IMR-90 (cell line): ENCODE measurements at regions of chr17 and their contacts with region 1.

Region 1: DNA sequence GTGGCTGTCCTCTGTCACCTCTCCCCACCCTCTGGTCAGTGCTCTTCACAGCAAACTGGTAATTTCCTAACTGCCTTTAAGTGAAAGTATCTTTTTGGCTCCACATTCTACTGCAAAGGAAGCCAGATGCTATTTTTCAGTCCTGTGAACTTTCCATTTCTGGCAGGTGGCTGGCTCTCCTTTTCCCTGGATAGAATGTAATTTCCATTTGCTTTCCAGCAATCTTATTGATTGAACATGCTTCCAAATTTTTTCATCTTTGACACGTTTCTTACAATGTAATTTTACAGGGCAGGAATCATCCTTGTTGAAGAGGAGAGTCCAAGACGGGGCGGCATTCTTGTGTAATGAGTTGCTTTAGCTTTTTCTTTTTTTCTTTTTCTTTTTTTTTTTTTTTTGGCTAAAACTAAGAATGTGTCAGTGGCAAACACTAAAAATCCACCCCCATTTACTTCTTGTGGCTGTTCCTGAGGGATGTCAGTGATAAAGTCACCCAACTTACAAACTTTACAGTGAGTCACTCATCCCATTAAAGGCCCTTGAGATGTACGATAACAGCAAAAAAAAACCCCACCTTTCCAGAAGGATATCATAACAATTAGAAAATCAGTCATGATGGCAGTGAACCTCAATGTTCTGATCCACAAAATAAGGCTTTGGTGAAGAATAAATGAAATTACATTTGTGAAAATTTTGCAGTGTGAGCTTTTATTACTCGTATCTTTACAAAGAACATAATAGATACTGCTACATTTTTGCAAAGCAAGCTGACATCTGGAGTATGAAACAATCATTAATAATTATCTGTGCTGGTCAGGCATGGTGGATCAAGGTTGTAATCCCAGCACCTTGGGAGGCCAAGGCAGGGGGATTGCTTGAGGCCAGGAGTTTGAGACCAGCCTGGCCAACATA is 29.3 kb upstream of the PRKCA start:
- DNase-seq: peak; percentile 89
- ATAC-seq: peak; percentile 38
- H3K4me3 ChIP-seq: peak overlapping the region; percentile 14; the same call in 1 of the 2 replicates
- H3K27ac ChIP-seq: peak overlapping the region; percentile 86
- H3K4me1 ChIP-seq: peaks cover 22% of the 10 kb centered on the region
- H3K27me3 ChIP-seq: no peaks in the 10 kb centered on the region
- CTCF ChIP-seq: no peak
- POLR2A ChIP-seq: no peak
- RAD21 ChIP-seq: no peak

Region 2: GRCh38 chr17:66287911-66288310 is 14.8 kb after region 1 on chr17:
- CTCF ChIA-PET with region 1: no interaction called
- POLR2A ChIA-PET with region 1: interaction called, 13 read pairs
- dilution Hi-C with region 1: no loop called
- in situ Hi-C with region 1: no loop called
- intact Hi-C with region 1: no loop called
- DNase-seq: no peak
- ATAC-seq: no peak
- H3K4me3 ChIP-seq: no peak overlapping the region
- H3K27ac ChIP-seq: no peak overlapping the region
- H3K4me1 ChIP-seq: peaks cover 2% of the 10 kb centered on the region; the same call in 1 of the 2 replicates
- H3K27me3 ChIP-seq: no peaks in the 10 kb centered on the region
- CTCF ChIP-seq: no peak
- POLR2A ChIP-seq: no peak
- RAD21 ChIP-seq: no peak